ENCODE measurements at regions of chr17 and their contacts with region 1.

Region 1: GRCh38 chr17:41688699-41689496 is at the start of gene EIF1:
- DNase-seq: peak; percentile 100
- H3K4me3 ChIP-seq: peak within 1 kb of the TSS; percentile 92 to 99 (median 94)
- H3K27ac ChIP-seq: peak within 1 kb of the TSS; percentile 97
- H3K4me1 ChIP-seq: peaks cover 0 to 3% (median 2%) of the 10 kb centered on the region in 4 experiments; a peak in 4 of 7 replicates
- H3K27me3 ChIP-seq: no peaks in the 10 kb centered on the region
- CTCF ChIP-seq: no peak
- EP300 ChIP-seq: peak in 1 of 2 experiments; percentile 48; a peak in 1 of 3 replicates
- POLR2A ChIP-seq: peak; percentile 99
- RAD21 ChIP-seq: no peak
- total RNA-seq, gene EIF1: 528 and 539 TPM in 2 replicates

Region 2: DNA sequence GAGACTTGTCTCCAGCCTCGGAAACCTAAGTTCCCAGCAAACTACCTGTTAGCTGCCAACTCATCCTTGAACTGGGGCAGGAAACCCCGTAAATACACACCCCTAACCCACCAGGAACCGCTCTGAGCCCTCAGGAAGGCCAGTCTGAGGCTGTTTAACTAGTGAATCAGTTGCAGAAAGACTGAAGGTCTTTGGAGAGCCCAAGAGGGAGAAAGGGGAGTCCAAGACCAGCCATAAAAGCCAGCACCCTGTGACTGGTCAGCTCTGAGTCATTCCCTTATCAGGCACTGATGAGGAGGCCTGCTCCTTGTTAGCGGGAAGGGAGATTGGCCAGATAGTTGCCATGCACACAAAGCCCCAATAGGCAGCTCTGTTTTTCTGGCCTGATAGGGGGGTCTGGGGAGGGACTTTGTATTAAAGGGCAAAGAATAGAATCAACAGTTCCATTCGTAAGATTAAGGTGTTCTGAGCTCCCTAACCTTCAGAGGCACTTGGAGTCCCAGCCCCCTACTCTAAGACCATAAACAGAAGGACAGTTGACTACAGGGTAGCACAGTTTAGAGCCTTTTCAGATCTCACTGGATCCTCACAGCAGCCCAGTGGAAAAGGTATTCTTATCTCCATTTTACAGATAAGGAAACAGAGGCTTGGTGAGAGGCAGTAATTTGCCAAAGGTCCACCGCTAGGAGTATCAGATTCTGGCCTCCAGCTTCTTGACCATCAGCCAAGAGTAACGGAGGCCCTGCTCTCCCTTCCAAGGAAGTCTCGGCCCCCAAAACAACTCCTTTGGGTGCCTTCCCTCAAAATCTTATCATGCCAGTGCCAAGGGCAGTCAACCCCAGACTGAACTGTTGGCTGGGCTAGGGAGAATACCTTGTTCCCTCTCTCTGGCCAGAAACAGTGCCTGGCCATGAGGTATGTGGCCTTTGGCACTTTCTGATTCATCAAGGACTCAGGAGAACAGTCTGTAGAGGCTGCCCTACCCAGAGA is 158.5 kb before region 1 on chr17:
- CTCF ChIA-PET with region 1: no interaction called
- POLR2A ChIA-PET with region 1: interaction called, 29 read pairs
- DNase-seq: no peak
- H3K4me3 ChIP-seq: no peak overlapping the region
- H3K27ac ChIP-seq: no peak overlapping the region
- H3K4me1 ChIP-seq: peaks cover 2 to 19% (median 10%) of the 10 kb centered on the region in 4 experiments
- H3K27me3 ChIP-seq: no peaks in the 10 kb centered on the region
- CTCF ChIP-seq: no peak
- EP300 ChIP-seq: no peak
- POLR2A ChIP-seq: no peak
- RAD21 ChIP-seq: no peak

Region 3: GRCh38 chr17:41738077-41738735 is 49.3 kb after region 1 on chr17:
- CTCF ChIA-PET with region 1: no interaction called
- POLR2A ChIA-PET with region 1: interaction called, 215 read pairs
- DNase-seq: peak; percentile 69 to 95
- H3K4me3 ChIP-seq: no peak overlapping the region
- H3K27ac ChIP-seq: peak overlapping the region; percentile 79
- H3K4me1 ChIP-seq: peaks cover 0 to 11% (median 8%) of the 10 kb centered on the region in 4 experiments; a peak in 6 of 7 replicates
- H3K27me3 ChIP-seq: peaks cover 13 to 45% (median 33%) of the 10 kb centered on the region in 4 experiments
- CTCF ChIP-seq: peak; percentile 97 to 99 (median 98)
- EP300 ChIP-seq: 0 out of 3 replicates have a peak, but pooled peaks of 1 of the 2 experiments have one; percentile 34
- POLR2A ChIP-seq: 0 out of 3 replicates have a peak, but pooled peaks of 1 of the 2 experiments have one; percentile 19
- RAD21 ChIP-seq: peak; percentile 99 to 100

Region 4: DNA sequence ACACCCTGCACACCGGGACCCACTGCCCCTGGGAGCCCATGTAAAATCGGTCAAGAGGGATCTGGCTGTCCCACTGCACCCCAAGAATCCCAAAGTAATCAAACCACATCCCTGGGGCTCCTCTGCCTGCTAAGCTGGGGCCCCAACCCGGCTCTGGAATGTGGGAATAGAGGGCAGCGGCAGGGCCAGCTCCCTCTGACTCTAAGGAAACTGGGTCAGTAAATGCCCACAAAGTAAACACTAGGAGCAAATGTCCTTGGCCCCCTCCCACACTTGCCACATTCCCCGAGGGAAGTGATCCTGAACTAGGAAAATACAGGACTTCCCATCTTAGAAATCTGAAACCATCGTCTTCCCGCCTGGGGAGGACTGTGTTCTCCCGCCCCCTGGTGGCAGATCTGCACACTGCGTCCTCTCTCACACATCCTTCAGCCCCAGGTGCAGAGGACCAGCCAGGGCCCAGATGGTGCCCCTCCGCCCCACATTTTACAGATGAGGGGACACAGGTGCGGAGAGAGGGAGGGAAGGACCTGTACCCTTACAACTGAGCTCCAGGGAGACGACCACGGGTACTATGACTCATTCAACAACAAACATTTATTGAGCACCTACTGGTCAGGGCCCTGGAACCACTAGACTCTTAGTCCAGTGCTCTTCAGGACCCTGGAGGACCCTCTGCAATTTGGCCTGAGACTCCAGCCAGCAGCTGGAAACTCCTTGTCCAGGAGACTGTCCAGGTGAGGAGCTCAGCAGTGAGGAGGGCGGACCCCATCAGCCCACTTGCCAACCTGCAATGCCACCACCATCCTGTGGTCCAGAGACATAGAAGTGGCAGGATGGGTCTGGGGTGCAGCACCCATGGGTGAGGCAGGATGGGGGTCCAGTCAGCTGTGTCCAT is 112.7 kb after region 1 on chr17:
- CTCF ChIA-PET with region 1: interaction called, 5 read pairs
- POLR2A ChIA-PET with region 1: interaction called, 30 read pairs
- DNase-seq: peak in 1 of 2 experiments; percentile 97
- H3K4me3 ChIP-seq: peak overlapping the region in 2 of 4 experiments; percentile 21 to 34; a peak in 4 of 8 replicates
- H3K27ac ChIP-seq: 0 out of 2 replicates have a peak overlapping the region, but pooled peaks have one; percentile 1
- H3K4me1 ChIP-seq: peaks cover 5 to 15% (median 10%) of the 10 kb centered on the region in 4 experiments
- H3K27me3 ChIP-seq: no peaks in the 10 kb centered on the region
- CTCF ChIP-seq: peak; percentile 92 to 97 (median 97)
- EP300 ChIP-seq: no peak
- POLR2A ChIP-seq: peak in 1 of 2 experiments; percentile 17; a peak in 1 of 3 replicates
- RAD21 ChIP-seq: peak; percentile 88 to 91

Region 5: DNA sequence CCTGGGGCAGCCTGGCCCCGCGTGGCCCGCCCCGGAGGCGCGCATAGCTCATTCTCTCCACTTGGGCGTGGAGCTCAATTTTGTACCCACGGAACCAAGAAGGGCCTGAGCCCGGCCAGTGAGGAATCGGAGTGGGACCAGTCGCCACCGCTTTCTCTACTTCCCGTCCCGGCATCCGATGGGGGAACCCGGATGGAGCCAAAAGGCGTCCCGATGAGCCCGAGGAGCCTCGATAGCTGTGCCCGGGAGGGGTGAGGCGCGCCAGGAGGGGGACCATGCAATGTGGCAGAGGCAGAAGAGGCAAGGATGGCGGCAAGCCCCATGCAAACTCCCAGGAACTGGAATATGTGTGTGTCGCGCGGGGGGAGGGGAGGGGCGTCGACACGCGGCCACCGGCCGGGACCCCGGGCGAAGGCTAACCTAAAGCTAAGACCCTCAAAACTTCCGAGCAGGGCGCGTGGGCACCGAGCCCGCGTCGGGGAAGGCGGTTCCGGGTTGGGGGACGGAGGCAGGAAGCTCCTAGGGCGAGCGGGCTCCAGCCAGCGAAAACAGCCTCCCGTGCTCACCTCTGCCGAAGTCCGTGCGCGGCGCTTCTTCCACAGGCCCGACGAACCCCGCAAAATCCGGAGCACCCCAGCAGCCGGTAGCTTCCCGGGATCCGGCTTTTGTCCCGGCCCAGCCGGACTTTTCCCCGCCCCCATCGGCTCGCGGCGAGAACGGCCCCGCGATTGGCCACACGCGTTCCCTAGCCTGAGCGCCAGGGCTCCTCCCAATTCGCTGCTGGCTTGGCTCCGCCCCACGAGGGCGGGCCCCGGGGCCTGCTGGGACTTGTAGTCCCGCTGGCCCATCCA is 229.6 kb after region 1 on chr17 and contains the start of gene ACLY:
- CTCF ChIA-PET with region 1: no interaction called
- POLR2A ChIA-PET with region 1: interaction called, 24 read pairs
- DNase-seq: peak; percentile 94 to 98
- H3K4me3 ChIP-seq: peak within 1 kb of the TSS; percentile 74 to 99 (median 93)
- H3K27ac ChIP-seq: peak within 1 kb of the TSS; percentile 85
- H3K4me1 ChIP-seq: peaks cover 13 to 31% (median 24%) of the 10 kb centered on the region in 4 experiments
- H3K27me3 ChIP-seq: no peaks in the 10 kb centered on the region
- CTCF ChIP-seq: 0 out of 4 replicates have a peak, but pooled peaks of 1 of the 3 experiments have one; percentile 5
- EP300 ChIP-seq: no peak; a peak in 1 of 3 replicates
- POLR2A ChIP-seq: peak; percentile 30 to 95
- RAD21 ChIP-seq: no peak
- total RNA-seq, gene ACLY: 388 and 393 TPM in 2 replicates

Measured in H1 (cell line).